ENCODE measurements at regions of chr3 and their contacts with region 1.

Region 1: GRCh38 chr3:71456156-71456555 is 127.4 kb downstream of the FOXP1 start:
- DNase-seq: peak; percentile 78
- H3K4me3 ChIP-seq: peak overlapping the region; percentile 63
- H3K27ac ChIP-seq: peak overlapping the region; percentile 92
- H3K4me1 ChIP-seq: peaks cover 82% of the 10 kb centered on the region
- CTCF ChIP-seq: peak; percentile 60

Region 2: DNA sequence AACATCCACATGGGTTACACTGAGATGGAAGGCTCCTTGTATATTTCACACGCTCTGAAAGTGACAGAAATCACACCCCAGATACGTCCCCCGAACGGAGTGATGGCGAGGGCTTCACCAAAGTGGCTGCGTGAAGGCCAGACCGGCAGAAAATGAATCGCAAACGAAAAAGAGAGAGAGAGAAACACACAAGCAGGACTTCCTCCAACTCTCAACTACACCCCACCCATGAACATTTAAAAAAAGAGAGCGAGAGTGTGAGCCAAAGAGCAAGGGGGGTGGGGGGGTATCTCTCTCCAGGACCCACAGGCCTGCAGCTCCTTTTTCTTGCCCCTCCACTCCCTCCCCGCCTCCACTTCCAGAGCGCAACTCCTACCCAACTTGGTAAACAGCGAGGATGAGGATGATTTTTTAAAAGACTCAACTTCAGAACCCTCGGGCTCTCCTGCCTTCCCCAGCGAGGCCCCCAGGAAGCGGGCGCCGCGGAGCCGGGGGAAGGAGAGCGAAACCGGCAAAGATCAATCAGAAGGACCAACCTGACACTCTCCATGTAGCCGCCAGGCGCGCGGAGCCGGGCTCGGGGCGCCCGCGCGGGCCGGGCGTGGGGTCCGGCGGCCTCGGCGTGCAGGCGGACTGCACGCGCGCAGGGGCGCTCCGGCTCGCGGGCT is 391.7 kb before region 1 on chr3:
- CTCF ChIA-PET with region 1: no interaction called
- POLR2A ChIA-PET with region 1: interaction called, 4 read pairs
- intact Hi-C with region 1: loop called (anchors 2 kb)
- DNase-seq: peak; percentile 57
- H3K4me3 ChIP-seq: peak overlapping the region; percentile 70
- H3K27ac ChIP-seq: peak overlapping the region; percentile 48
- H3K4me1 ChIP-seq: peaks cover 63% of the 10 kb centered on the region
- CTCF ChIP-seq: no peak

Region 3: GRCh38 chr3:71397046-71397445 is 59.1 kb before region 1 on chr3:
- CTCF ChIA-PET with region 1: no interaction called
- POLR2A ChIA-PET with region 1: interaction called, 12 read pairs
- intact Hi-C with region 1: no loop called
- DNase-seq: peak; percentile 42
- H3K4me3 ChIP-seq: no peak overlapping the region
- H3K27ac ChIP-seq: no peak overlapping the region
- H3K4me1 ChIP-seq: peaks cover 66% of the 10 kb centered on the region
- CTCF ChIP-seq: peak; percentile 69

Region 4: GRCh38 chr3:71421820-71422566 is 34.2 kb before region 1 on chr3:
- CTCF ChIA-PET with region 1: interaction called, 4 read pairs
- POLR2A ChIA-PET with region 1: interaction called, 22 read pairs
- intact Hi-C with region 1: loop called (anchors 5 kb)
- DNase-seq: peak; percentile 90
- H3K4me3 ChIP-seq: peak overlapping the region; percentile 64
- H3K27ac ChIP-seq: peak overlapping the region; percentile 98
- H3K4me1 ChIP-seq: peaks cover 93% of the 10 kb centered on the region
- CTCF ChIP-seq: no peak

Region 5: GRCh38 chr3:71444028-71444860 is 11.9 kb before region 1 on chr3:
- CTCF ChIA-PET with region 1: interaction called, 4 read pairs
- POLR2A ChIA-PET with region 1: interaction called, 77 read pairs
- intact Hi-C with region 1: no loop called
- DNase-seq: peak; percentile 94
- H3K4me3 ChIP-seq: peak overlapping the region; percentile 61
- H3K27ac ChIP-seq: peak overlapping the region; percentile 99
- H3K4me1 ChIP-seq: peaks cover 98% of the 10 kb centered on the region
- CTCF ChIP-seq: no peak

Region 6: GRCh38 chr3:71512000-71512399 is 55.8 kb after region 1 on chr3:
- CTCF ChIA-PET with region 1: no interaction called
- POLR2A ChIA-PET with region 1: interaction called, 3 read pairs
- intact Hi-C with region 1: loop called (anchors 1 kb)
- DNase-seq: peak; percentile 77
- H3K4me3 ChIP-seq: no peak overlapping the region
- H3K27ac ChIP-seq: peak overlapping the region; percentile 14
- H3K4me1 ChIP-seq: peaks cover 38% of the 10 kb centered on the region
- CTCF ChIP-seq: peak; percentile 83

Region 7: GRCh38 chr3:71563827-71564226 is 107.7 kb after region 1 on chr3:
- CTCF ChIA-PET with region 1: no interaction called
- POLR2A ChIA-PET with region 1: interaction called, 17 read pairs
- intact Hi-C with region 1: no loop called
- DNase-seq: peak; percentile 94
- H3K4me3 ChIP-seq: peak overlapping the region; percentile 60
- H3K27ac ChIP-seq: peak overlapping the region; percentile 98
- H3K4me1 ChIP-seq: peaks cover 82% of the 10 kb centered on the region
- CTCF ChIP-seq: no peak

Region 8: GRCh38 chr3:73401616-73402290 is 1945.6 kb after region 1 on chr3:
- CTCF ChIA-PET with region 1: no interaction called
- POLR2A ChIA-PET with region 1: no interaction called
- intact Hi-C with region 1: no loop called
- DNase-seq: no peak
- H3K4me3 ChIP-seq: no peak overlapping the region
- H3K27ac ChIP-seq: no peak overlapping the region
- H3K4me1 ChIP-seq: no peaks in the 10 kb centered on the region
- CTCF ChIP-seq: no peak